SK-N-SH (cell line): ENCODE measurements at regions of chr10 and their contacts with region 1.

Region 1: DNA sequence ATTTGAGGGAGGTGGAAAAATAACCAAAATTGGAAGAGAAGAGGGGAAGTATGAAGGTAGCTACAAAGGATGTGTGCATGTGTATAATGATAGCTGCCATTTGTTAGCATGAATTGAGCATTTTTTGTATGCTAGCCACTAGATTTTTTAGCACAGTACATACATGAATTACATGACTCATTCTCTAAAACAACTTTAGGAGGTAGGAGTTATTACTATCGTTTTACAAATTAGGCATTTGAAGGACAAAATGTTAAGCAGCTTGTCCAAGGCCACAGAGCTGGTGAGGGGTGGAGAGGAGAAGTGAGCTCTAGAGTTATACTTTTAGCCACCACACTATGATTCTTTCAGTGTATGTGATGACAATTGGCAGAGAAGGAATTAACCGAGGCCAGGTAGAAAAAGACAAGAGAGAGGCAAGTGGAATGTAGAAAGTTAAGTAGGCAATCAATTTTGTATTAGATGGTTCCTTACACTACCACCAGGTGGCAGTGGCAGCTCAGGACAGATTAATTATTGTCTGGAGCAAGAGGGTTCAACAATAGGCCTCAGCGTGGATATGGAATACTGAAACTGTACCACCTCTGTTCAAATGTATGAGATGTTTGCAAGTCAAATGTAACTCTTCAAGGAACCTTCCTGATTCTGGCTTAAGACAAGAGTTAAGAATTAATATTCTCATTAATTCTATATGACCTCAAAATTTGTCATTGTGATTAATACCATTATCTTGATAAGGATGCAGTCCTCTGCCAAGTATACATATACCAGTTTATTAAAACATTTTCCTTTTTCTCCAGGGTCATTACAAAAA is 128.0 kb downstream of the MBL2 start:
- DNase-seq: peak; percentile 25
- H3K4me3 ChIP-seq: no peak overlapping the region; a peak in 1 of 4 replicates
- H3K27ac ChIP-seq: peak overlapping the region in 1 of 2 experiments; percentile 60; a peak in 2 of 4 replicates
- H3K4me1 ChIP-seq: peaks cover 0 to 2% of the 10 kb centered on the region in 2 experiments; a peak in 2 of 4 replicates
- H3K27me3 ChIP-seq: no peaks in the 10 kb centered on the region
- CTCF ChIP-seq: peak; percentile 90
- EP300 ChIP-seq: no peak
- RAD21 ChIP-seq: peak; percentile 93

Region 2: GRCh38 chr10:52466464-52466863 is 178.1 kb before region 1 on chr10:
- CTCF ChIA-PET with region 1: no interaction called
- POLR2A ChIA-PET with region 1: no interaction called
- DNase-seq: peak; percentile 11
- H3K4me3 ChIP-seq: no peak overlapping the region
- H3K27ac ChIP-seq: peak overlapping the region in 1 of 2 experiments; percentile 87; a peak in 2 of 4 replicates
- H3K4me1 ChIP-seq: peaks cover 0 to 9% of the 10 kb centered on the region in 2 experiments; a peak in 1 of 4 replicates
- H3K27me3 ChIP-seq: no peaks in the 10 kb centered on the region
- CTCF ChIP-seq: no peak
- EP300 ChIP-seq: no peak
- RAD21 ChIP-seq: 0 out of 2 replicates have a peak, but pooled peaks have one; percentile 5

Region 3: DNA sequence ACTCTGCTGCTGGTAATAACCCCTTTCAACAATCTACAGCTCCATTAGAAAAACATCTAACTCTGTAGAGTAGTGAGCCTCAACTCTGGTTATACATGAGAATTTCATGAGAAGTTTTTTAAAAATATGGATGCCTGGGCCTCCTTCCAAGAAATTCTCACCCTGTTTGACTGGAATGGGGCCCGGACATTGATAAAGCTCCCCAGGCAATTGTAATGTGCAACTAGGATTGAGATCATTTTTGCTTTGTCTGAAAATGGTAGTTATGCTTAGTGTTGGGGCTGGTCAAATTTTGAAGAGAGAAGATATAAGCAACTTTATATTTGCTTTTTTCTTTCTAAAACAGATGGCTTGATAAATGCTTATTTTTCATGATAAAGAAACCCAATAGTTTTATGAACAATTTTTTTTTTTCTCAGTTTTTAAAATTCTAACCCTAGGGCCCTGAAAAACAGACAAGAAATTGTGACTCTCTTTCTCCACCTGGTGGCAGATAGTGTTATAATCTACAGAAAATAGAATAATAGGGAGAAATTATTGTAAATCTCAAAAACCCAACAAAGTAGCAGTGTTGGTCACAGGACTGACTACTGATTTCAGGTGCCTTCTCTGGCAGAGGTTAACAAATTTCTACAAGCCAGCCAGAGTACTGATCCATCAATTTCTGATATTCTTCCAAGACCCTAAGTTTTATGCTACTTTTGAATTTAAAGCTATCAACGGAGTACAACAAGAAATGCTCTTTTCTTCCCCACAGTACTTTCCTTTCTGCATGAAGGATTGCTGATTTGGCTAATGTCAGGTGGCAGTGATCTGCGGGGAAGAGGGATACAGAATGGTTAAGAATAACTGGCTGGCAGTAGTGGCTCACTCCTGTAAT is 155.7 kb before region 1 on chr10:
- CTCF ChIA-PET with region 1: interaction called, 12 read pairs
- POLR2A ChIA-PET with region 1: no interaction called
- DNase-seq: peak; percentile 38
- H3K4me3 ChIP-seq: no peak overlapping the region; a peak in 1 of 4 replicates
- H3K27ac ChIP-seq: peak overlapping the region; percentile 47 to 89; a peak in 3 of 4 replicates
- H3K4me1 ChIP-seq: peaks cover 5 to 14% of the 10 kb centered on the region in 2 experiments; a peak in 3 of 4 replicates
- H3K27me3 ChIP-seq: no peaks in the 10 kb centered on the region
- CTCF ChIP-seq: peak; percentile 75
- EP300 ChIP-seq: no peak
- RAD21 ChIP-seq: peak; percentile 79

Region 4: DNA sequence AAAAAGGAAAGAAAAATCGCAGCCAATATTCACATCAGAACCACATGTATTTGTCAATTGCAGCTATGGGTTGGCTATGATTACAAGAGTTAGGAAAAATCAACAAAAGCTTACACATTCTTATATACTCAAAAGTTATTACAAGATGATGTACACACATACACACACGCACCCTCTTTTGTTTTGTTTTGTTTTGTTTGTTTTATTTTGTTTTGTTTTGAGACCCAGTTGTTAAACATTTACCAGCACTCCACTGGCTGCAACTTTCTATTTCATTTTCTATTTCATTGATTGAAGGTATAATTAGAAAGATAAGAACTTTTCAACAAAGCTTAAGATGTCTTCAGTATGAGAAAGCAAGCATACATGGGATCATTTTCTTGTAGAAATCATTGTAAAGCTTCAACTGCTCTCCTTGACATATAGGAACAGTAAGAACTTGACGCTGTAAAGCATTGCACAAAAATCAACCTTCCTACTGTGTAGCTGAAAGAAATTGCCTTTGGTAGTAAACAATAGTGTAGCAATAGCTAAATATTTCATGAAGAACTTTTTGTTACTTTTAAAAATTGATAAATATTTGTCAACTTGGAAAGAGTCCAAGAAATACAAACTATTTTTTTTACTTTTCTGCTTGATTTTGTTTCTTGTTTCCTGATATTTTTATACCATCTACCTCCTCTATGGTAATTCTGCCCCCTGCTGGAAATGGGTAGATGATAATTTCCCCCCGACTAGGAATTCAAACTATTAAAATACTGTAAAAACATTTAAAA is 77.9 kb before region 1 on chr10:
- CTCF ChIA-PET with region 1: interaction called, 13 read pairs
- POLR2A ChIA-PET with region 1: no interaction called
- DNase-seq: peak; percentile 2
- H3K4me3 ChIP-seq: no peak overlapping the region; a peak in 1 of 4 replicates
- H3K27ac ChIP-seq: peak overlapping the region in 1 of 2 experiments; percentile 1; a peak in 1 of 4 replicates
- H3K4me1 ChIP-seq: peaks cover 0 to 10% of the 10 kb centered on the region in 2 experiments; a peak in 1 of 4 replicates
- H3K27me3 ChIP-seq: no peaks in the 10 kb centered on the region
- CTCF ChIP-seq: peak; percentile 69
- EP300 ChIP-seq: no peak
- RAD21 ChIP-seq: peak; percentile 63

Region 5: GRCh38 chr10:52729271-52730104 is 84.9 kb after region 1 on chr10:
- CTCF ChIA-PET with region 1: interaction called, 34 read pairs
- POLR2A ChIA-PET with region 1: no interaction called
- DNase-seq: peak; percentile 56
- H3K4me3 ChIP-seq: no peak overlapping the region; a peak in 1 of 4 replicates
- H3K27ac ChIP-seq: peak overlapping the region in 1 of 2 experiments; percentile 62; a peak in 1 of 4 replicates
- H3K4me1 ChIP-seq: no peaks in the 10 kb centered on the region; a peak in 2 of 4 replicates
- H3K27me3 ChIP-seq: no peaks in the 10 kb centered on the region
- CTCF ChIP-seq: peak; percentile 77
- EP300 ChIP-seq: no peak
- RAD21 ChIP-seq: peak; percentile 86

Region 6: GRCh38 chr10:52746169-52746568 is 101.6 kb after region 1 on chr10:
- CTCF ChIA-PET with region 1: interaction called, 10 read pairs
- POLR2A ChIA-PET with region 1: no interaction called
- DNase-seq: no peak
- H3K4me3 ChIP-seq: no peak overlapping the region
- H3K27ac ChIP-seq: no peak overlapping the region
- H3K4me1 ChIP-seq: peaks cover 0 to 5% of the 10 kb centered on the region in 2 experiments; a peak in 1 of 4 replicates
- H3K27me3 ChIP-seq: no peaks in the 10 kb centered on the region
- CTCF ChIP-seq: no peak; the same call in 1 of the 2 replicates
- EP300 ChIP-seq: no peak
- RAD21 ChIP-seq: no peak

Region 7: DNA sequence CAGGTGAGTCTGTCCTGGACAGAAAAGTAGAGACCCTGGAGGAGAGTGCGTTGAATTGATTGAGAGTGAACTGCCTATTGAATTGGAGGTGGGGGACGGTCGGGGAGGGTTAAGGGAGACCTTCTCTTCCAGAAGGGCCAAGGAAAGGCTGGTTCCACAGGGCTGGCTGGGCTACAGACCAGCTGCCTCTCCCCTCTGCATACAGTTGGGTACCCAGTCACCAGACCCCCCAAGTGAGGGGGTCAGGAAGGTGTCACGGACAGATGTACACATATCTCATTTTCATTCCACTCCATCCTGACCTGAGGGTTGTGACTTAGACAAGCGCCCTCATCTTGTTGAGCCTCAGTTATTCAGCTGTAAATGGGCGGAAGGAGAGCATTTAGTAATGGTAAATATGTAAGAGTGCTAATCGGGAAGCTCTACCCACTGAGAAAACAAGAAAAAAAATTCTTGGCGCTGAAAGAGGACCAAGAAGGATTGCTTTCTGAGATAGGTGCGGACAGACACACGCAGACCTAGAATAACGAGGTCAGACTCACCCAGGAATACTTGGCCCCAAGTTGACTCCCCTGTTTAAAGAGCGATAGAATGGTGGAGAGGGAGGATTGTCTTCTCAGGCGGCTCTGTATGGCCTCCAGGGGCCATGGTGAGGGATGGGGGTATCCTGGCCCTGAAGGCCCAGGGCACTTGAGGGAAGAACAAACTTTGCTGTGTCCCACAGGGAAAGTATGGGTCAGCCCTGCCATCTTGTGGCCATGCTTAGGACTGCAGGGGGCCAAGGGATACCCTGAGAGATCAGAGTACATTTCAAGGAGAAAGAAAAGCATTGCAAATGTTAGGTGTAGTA is 135.2 kb after region 1 on chr10:
- CTCF ChIA-PET with region 1: interaction called, 39 read pairs
- POLR2A ChIA-PET with region 1: no interaction called
- DNase-seq: peak; percentile 81
- H3K4me3 ChIP-seq: peak overlapping the region in 1 of 2 experiments; percentile 57; a peak in 1 of 4 replicates
- H3K27ac ChIP-seq: no peak overlapping the region; a peak in 1 of 4 replicates
- H3K4me1 ChIP-seq: peaks cover 0 to 2% of the 10 kb centered on the region in 2 experiments; a peak in 1 of 4 replicates
- H3K27me3 ChIP-seq: no peaks in the 10 kb centered on the region
- CTCF ChIP-seq: peak; percentile 93
- EP300 ChIP-seq: no peak
- RAD21 ChIP-seq: peak; percentile 96